CD4-positive, alpha-beta memory T cell (primary cell): ENCODE measurements at regions of chr1 and their contacts with region 1.

Region 1: GRCh38 chr1:240611619-240612480 is at the start of gene GREM2:
- DNase-seq: peak; percentile 37 to 67 (median 50)
- H3K4me3 ChIP-seq: peak within 1 kb of the TSS; percentile 77 to 81
- H3K4me3 Mint-ChIP-seq: peak within 1 kb of the TSS; percentile 91 to 98 (median 96)
- H3K27ac ChIP-seq: peak within 1 kb of the TSS; percentile 72
- H3K27ac Mint-ChIP-seq: peak within 1 kb of the TSS; percentile 90 to 97 (median 94)
- H3K4me1 ChIP-seq: peaks cover 45% of the 10 kb centered on the region
- H3K4me1 Mint-ChIP-seq: peaks cover 22 to 66% (median 45%) of the 10 kb centered on the region in 4 donors
- H3K27me3 ChIP-seq: no peaks in the 10 kb centered on the region
- H3K27me3 Mint-ChIP-seq: peaks cover 0 to 6% of the 10 kb centered on the region in 2 donors
- total RNA-seq, gene GREM2: 1.6 to 1.8 TPM

Region 2: GRCh38 chr1:239914751-239915231 is 697.1 kb before region 1 on chr1:
- CTCF ChIA-PET with region 1: no interaction called
- POLR2A ChIA-PET with region 1: no interaction called
- intact Hi-C with region 1: no loop called
- DNase-seq: no peak
- H3K4me3 ChIP-seq: no peak overlapping the region
- H3K4me3 Mint-ChIP-seq: no peak overlapping the region
- H3K27ac ChIP-seq: no peak overlapping the region
- H3K27ac Mint-ChIP-seq: no peak overlapping the region
- H3K4me1 ChIP-seq: no peaks in the 10 kb centered on the region
- H3K4me1 Mint-ChIP-seq: no peaks in the 10 kb centered on the region
- H3K27me3 ChIP-seq: no peaks in the 10 kb centered on the region
- H3K27me3 Mint-ChIP-seq: peaks cover 3 to 9% of the 10 kb centered on the region in 2 donors

Region 3: DNA sequence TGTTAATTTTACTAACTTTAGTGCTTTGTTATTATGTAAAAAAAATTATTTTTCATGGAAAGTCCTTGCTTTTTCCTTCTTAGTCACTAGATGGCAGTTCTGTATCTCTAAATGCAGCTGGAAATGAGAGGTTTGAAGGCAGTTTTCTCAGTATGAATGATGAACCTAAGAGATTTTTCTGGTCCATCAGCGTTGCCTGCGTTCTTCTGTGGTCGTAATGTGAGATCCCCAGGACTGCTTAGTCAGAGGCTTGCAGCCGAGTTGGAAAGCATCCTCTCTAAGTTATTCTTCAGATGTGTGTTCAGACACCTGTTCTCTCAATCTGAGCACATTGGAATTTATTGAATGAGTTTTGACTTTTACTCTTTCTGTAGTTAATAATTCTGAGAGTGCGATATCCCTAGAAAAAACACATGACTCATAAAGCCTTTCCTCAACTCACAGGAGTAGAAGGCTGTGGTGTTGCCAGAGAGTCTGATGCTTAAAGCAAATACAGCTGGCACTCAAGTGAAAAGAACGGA is 420.9 kb before region 1 on chr1:
- CTCF ChIA-PET with region 1: no interaction called
- POLR2A ChIA-PET with region 1: no interaction called
- intact Hi-C with region 1: loop called (anchors 5 kb)
- DNase-seq: no peak
- H3K4me3 ChIP-seq: no peak overlapping the region
- H3K4me3 Mint-ChIP-seq: no peak overlapping the region
- H3K27ac ChIP-seq: no peak overlapping the region
- H3K27ac Mint-ChIP-seq: no peak overlapping the region
- H3K4me1 ChIP-seq: no peaks in the 10 kb centered on the region
- H3K4me1 Mint-ChIP-seq: peaks cover 2 to 4% (median 3%) of the 10 kb centered on the region in 4 donors
- H3K27me3 ChIP-seq: no peaks in the 10 kb centered on the region
- H3K27me3 Mint-ChIP-seq: peaks cover 12 to 14% of the 10 kb centered on the region in 2 donors

Region 4: GRCh38 chr1:240210026-240210425 is 401.8 kb before region 1 on chr1:
- CTCF ChIA-PET with region 1: no interaction called
- POLR2A ChIA-PET with region 1: no interaction called
- intact Hi-C with region 1: no loop called
- DNase-seq: no peak
- H3K4me3 ChIP-seq: no peak overlapping the region
- H3K4me3 Mint-ChIP-seq: no peak overlapping the region
- H3K27ac ChIP-seq: no peak overlapping the region
- H3K27ac Mint-ChIP-seq: no peak overlapping the region
- H3K4me1 ChIP-seq: no peaks in the 10 kb centered on the region
- H3K4me1 Mint-ChIP-seq: no peaks in the 10 kb centered on the region
- H3K27me3 ChIP-seq: no peaks in the 10 kb centered on the region
- H3K27me3 Mint-ChIP-seq: no peaks in the 10 kb centered on the region

Region 5: GRCh38 chr1:240455228-240455821 is 156.5 kb before region 1 on chr1:
- CTCF ChIA-PET with region 1: interaction called, 34 read pairs
- POLR2A ChIA-PET with region 1: interaction called, 5 read pairs
- intact Hi-C with region 1: loop called (anchors 1 kb)
- DNase-seq: peak in 4 of 5 donors; percentile 30 to 53 (median 36)
- H3K4me3 ChIP-seq: no peak overlapping the region
- H3K4me3 Mint-ChIP-seq: no peak overlapping the region
- H3K27ac ChIP-seq: no peak overlapping the region
- H3K27ac Mint-ChIP-seq: no peak overlapping the region
- H3K4me1 ChIP-seq: no peaks in the 10 kb centered on the region
- H3K4me1 Mint-ChIP-seq: no peaks in the 10 kb centered on the region
- H3K27me3 ChIP-seq: no peaks in the 10 kb centered on the region
- H3K27me3 Mint-ChIP-seq: no peaks in the 10 kb centered on the region

Region 6: DNA sequence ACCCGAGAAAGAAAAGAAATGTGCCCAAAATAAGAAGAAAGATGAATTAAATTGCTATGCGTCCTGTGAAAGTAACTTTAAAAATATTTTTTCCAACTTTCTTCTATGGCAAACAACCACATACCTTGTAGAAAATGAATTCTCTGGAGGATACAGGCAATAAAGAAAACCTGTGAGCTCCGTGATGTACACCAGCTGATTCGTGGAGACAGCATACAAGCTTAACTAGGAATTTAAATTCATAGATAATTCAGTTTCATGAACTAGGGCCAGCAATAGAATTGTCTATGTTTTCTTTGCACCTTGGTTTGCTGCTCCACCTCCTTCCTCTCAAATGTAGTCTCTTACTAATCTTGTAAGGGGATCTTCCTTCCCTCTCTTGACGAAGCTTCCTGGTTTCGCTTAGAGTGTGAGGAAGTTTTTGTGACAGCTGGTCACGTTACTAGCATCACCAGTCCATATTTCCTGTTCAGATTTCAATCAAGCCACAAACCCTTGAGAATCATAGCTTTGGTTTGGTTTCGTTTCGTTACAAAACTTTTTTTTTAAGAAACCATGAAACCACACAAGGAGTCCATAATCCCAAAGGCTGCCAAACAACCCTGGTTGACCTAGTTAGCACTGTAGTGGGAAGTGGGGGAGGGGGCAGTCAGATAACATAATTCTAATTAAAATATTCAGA is 35.7 kb before region 1 on chr1:
- CTCF ChIA-PET with region 1: interaction called, 3 read pairs
- POLR2A ChIA-PET with region 1: no interaction called
- intact Hi-C with region 1: loop called (anchors 1 kb)
- DNase-seq: peak; percentile 69 to 83 (median 79)
- H3K4me3 ChIP-seq: no peak overlapping the region
- H3K4me3 Mint-ChIP-seq: peak overlapping the region; percentile 46 to 87 (median 68)
- H3K27ac ChIP-seq: peak overlapping the region; percentile 53
- H3K27ac Mint-ChIP-seq: peak overlapping the region; percentile 81 to 92 (median 89)
- H3K4me1 ChIP-seq: peaks cover 19% of the 10 kb centered on the region
- H3K4me1 Mint-ChIP-seq: peaks cover 14 to 48% (median 33%) of the 10 kb centered on the region in 4 donors
- H3K27me3 ChIP-seq: no peaks in the 10 kb centered on the region
- H3K27me3 Mint-ChIP-seq: no peaks in the 10 kb centered on the region

Region 7: DNA sequence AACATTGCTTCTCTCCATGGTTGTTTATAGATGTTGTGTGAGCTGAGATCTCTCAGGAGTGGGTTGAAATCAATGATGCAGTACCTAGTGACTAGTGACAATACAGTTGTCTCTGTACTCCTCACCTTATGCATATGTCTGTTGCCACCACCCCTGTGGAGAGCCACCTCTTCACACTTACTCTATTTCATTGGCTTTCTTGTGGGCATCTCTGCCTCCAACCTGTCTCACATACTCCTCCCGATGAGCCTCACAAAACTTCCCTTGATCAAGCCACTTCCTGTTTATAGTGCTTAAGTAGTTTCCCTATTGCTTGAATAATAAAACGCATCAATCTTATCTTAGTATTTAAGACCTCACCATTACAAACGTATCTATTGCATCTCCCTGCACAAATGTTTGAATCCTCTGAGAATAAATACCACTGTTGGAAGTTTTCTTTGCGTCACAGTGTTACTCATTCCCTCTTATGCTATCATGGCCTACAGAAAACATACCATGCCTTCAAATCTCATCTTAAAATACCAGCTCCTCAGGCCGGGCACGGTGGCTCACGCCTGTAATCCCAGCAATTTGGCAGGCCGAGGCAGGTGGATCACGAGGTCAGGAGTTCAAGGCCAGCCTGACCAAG is 54.8 kb after region 1 on chr1:
- CTCF ChIA-PET with region 1: no interaction called
- POLR2A ChIA-PET with region 1: no interaction called
- intact Hi-C with region 1: loop called (anchors 5 kb)
- DNase-seq: peak; percentile 33 to 70 (median 60)
- H3K4me3 ChIP-seq: no peak overlapping the region
- H3K4me3 Mint-ChIP-seq: peak overlapping the region in 7 of 8 donors; percentile 10 to 80 (median 41)
- H3K27ac ChIP-seq: no peak overlapping the region
- H3K27ac Mint-ChIP-seq: peak overlapping the region; percentile 47 to 94 (median 85)
- H3K4me1 ChIP-seq: peaks cover 25% of the 10 kb centered on the region
- H3K4me1 Mint-ChIP-seq: peaks cover 8 to 21% (median 15%) of the 10 kb centered on the region in 4 donors
- H3K27me3 ChIP-seq: no peaks in the 10 kb centered on the region
- H3K27me3 Mint-ChIP-seq: no peaks in the 10 kb centered on the region

Region 8: DNA sequence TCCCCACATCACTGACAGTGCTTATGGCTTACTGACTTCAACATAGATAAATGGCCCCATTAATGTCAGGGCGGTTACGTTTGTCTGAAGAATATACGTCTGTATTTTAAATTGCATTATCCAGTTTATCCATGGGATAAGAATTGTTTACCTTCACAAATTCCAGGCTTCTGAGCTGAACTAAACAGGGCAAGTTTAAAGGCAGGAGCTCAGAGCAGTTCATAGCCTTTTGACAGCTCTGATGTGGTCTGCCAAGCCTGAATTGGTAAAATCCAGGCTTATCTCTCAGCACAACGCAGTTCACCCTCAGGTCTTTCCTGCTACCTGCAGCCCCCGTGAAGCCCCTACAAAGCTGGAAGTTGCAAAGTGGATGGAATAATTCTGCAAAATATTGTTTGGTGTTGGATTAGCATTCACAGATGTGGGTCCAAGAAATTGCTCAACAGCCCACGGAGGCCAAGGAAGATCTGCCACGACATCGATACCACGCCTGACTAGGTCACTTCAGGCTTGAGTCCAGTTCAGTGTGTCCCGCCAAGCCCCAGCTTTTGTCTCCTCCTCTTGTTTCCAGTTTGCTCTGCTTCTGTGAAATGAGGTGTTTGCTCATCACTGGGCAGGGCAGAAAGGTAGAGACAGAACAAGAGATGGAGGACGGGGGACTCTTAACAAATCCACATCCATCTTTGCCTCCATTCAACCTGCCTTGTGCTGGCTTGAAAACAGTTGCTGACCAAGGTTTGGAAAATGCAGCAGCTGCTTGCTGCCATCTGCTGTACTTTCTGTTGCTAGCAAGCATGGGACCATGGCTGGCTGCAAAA is 79.9 kb after region 1 on chr1:
- CTCF ChIA-PET with region 1: no interaction called
- POLR2A ChIA-PET with region 1: no interaction called
- intact Hi-C with region 1: loop called (anchors 1 kb)
- DNase-seq: peak in 4 of 5 donors; percentile 12 to 38 (median 20)
- H3K4me3 ChIP-seq: no peak overlapping the region
- H3K4me3 Mint-ChIP-seq: no peak overlapping the region
- H3K27ac ChIP-seq: no peak overlapping the region
- H3K27ac Mint-ChIP-seq: no peak overlapping the region
- H3K4me1 ChIP-seq: peaks cover 13% of the 10 kb centered on the region
- H3K4me1 Mint-ChIP-seq: peaks cover 6 to 22% (median 9%) of the 10 kb centered on the region in 4 donors
- H3K27me3 ChIP-seq: no peaks in the 10 kb centered on the region
- H3K27me3 Mint-ChIP-seq: no peaks in the 10 kb centered on the region